ENCODE measurements at regions of chr1 and their contacts with region 1.

Region 1: DNA sequence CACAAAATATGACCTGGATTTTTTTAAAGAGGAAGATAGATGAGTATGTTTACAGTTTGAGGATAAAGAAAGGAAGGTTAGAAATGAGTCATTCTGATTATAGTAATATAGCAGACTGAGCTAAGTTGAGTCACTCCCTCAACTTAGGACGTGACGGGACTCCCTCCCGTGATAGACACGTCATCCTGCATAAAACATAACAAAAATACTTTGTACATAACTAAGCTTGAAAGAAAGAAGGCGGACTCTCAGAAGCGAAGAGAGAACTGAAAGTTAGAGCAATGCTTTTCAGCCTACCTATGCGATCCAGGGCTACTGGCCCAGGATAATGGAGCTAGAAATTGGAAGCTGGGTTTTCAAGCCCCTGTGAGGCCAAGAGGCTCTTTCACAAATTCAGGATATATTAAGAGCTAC is 53.0 kb upstream of the DESI2 start:
- DNase-seq: no peak
- H3K4me3 ChIP-seq: no peak overlapping the region
- H3K27ac ChIP-seq: no peak overlapping the region
- H3K4me1 ChIP-seq: no peaks in the 10 kb centered on the region
- H3K27me3 ChIP-seq: no peaks in the 10 kb centered on the region
- CTCF ChIP-seq: no peak
- EP300 ChIP-seq: no peak
- POLR2A ChIP-seq: no peak
- RAD21 ChIP-seq: no peak

Region 2: DNA sequence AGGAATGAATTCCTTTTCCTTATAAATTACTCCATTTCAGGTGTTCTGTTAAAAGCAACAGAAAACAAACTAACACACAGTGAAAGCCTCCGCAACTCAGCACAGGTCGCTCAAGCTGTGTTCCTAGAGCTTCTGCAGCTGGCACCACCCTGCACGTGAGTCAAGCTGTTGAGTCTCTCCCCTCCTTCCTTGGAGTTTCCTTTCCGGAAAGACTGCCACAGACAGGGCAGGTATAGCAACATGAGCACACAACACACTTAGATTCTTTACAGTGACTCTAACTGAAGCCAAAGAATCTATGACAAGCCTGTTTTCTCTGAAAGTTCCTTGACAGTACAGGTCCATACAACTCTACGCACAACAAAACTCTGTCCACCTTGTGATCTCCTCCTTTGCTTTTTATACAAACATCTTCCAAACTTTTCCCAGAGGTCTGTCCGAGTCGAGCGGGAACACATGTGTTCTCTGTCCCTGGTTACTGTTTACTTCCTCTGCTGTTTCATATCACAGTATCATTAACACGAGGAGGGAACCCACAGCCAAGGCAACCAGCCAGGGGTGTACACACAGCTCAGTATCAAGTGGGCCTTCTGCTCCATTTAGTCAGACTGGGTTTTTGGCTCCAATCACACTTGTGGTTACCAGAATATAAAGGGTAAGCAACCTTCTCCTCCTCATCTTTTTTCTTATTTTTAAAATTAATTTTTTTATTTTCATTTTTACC is 14.3 kb after region 1 on chr1:
- CTCF ChIA-PET with region 1: interaction called, 16 read pairs
- POLR2A ChIA-PET with region 1: no interaction called
- DNase-seq: no peak
- H3K4me3 ChIP-seq: no peak overlapping the region
- H3K27ac ChIP-seq: no peak overlapping the region
- H3K4me1 ChIP-seq: peaks cover 0 to 6% (median 1%) of the 10 kb centered on the region in 4 experiments; a peak in 1 of 7 replicates
- H3K27me3 ChIP-seq: no peaks in the 10 kb centered on the region
- CTCF ChIP-seq: no peak
- EP300 ChIP-seq: no peak
- POLR2A ChIP-seq: no peak
- RAD21 ChIP-seq: no peak

Region 3: DNA sequence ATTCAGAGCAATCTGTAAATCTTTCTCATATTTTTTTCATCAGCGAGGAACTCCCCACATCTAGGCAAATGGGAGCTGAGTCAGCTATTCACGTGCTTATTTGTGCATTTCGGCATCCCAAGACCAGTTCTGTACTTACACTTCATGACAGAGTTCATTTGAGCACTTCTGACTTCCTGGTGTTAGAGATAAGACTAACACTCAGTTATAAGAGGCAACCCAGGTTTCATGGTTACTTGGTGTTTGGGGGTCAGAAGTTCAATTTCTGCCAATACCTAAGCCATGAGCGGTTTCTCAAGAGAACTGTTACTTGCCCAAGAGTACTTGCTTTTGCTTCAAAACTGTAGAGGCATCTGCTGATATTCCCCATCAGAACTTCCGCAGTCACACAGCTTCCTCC is 28.8 kb after region 1 on chr1:
- CTCF ChIA-PET with region 1: interaction called, 50 read pairs
- POLR2A ChIA-PET with region 1: no interaction called
- DNase-seq: no peak
- H3K4me3 ChIP-seq: no peak overlapping the region
- H3K27ac ChIP-seq: no peak overlapping the region
- H3K4me1 ChIP-seq: no peaks in the 10 kb centered on the region
- H3K27me3 ChIP-seq: no peaks in the 10 kb centered on the region
- CTCF ChIP-seq: no peak
- EP300 ChIP-seq: no peak
- POLR2A ChIP-seq: no peak
- RAD21 ChIP-seq: no peak

Region 4: DNA sequence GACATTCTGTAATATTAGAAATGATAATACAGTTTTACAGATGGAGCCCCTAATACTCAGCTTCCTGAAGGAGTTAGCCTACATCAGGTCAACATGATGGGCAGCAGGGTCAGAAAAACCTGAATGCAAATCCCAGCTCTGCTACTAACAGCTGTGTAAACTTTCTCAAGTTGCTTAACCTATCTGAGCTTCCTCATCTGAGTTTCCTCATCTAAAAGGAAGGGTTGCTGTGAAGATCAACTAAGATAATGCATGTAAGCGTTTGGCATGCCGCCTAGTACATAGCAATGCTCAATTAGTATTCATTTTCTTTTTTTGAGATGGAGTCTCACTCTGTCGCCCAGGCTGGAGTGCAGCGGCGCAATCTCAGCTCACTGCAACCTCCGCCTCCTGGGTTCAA is 34.6 kb after region 1 on chr1:
- CTCF ChIA-PET with region 1: interaction called, 50 read pairs
- POLR2A ChIA-PET with region 1: no interaction called
- DNase-seq: no peak
- H3K4me3 ChIP-seq: no peak overlapping the region
- H3K27ac ChIP-seq: no peak overlapping the region
- H3K4me1 ChIP-seq: peaks cover 0 to 3% (median 2%) of the 10 kb centered on the region in 4 experiments; a peak in 2 of 7 replicates
- H3K27me3 ChIP-seq: no peaks in the 10 kb centered on the region
- CTCF ChIP-seq: no peak
- EP300 ChIP-seq: no peak
- POLR2A ChIP-seq: no peak
- RAD21 ChIP-seq: no peak

Region 5: DNA sequence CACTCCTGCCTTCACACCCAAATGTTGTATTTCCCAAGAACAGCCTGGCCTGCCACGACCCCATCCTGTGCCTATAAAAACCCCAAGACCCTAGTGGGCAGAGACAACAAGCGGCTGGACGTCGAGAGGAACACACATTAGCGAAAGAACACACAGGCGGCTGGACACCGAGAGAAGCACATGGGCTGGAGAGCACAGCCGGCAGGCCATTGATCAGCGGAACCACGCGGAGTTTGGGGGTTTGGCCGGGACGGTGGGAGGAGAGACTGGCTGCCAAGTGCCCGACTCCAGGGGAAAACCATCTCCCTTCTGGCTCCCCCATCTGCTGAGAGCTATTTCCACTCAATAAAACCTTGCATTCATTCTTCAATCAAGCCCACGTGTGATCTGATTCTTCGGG is 42.6 kb after region 1 on chr1:
- CTCF ChIA-PET with region 1: interaction called, 50 read pairs
- POLR2A ChIA-PET with region 1: no interaction called
- DNase-seq: no peak
- H3K4me3 ChIP-seq: no peak overlapping the region
- H3K27ac ChIP-seq: no peak overlapping the region
- H3K4me1 ChIP-seq: peaks cover 0 to 4% (median 1%) of the 10 kb centered on the region in 4 experiments; a peak in 1 of 7 replicates
- H3K27me3 ChIP-seq: no peaks in the 10 kb centered on the region
- CTCF ChIP-seq: no peak
- EP300 ChIP-seq: no peak
- POLR2A ChIP-seq: no peak
- RAD21 ChIP-seq: no peak

Region 6: DNA sequence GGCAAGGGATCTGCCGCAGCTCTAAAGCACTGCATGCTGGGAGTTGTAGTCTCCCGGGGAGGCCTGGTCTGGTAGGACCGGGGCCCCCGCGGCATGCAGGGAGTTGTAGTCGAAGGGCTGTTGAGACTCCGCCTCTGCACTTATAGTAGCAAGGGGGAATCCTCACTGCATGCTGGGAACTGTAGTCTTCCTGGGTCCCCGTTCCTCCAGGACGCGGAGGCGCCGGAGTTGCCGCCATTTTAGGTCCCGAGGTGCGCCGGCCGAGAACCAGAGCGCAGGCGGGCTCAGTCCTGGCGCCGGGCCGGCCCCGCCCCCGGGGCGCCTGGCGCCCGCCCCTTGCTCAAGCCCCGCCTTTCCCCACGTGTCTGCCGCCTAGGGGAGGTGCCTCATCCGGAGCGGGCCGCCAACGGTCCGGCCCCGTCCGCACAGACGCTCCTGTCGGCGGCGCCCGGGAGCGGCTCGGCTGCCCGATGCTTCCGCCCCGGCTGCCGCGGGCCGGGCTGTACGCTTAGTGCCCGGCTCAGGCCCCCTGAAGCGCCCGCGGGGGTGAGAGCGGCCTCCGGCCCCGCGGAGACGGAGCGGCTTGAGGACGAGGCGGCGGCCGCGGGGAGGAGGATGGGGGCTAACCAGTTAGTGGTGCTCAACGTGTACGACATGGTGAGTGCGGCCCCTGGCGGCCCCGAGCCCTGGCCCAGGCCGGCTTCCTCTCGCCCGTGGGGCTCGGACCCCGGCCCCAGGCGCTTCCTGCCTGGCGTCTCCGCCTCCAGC is 52.9 kb after region 1 on chr1 and contains the start of gene DESI2:
- CTCF ChIA-PET with region 1: interaction called, 20 read pairs
- POLR2A ChIA-PET with region 1: interaction called, 6 read pairs
- DNase-seq: peak; percentile 95 to 98
- H3K4me3 ChIP-seq: peak within 1 kb of the TSS; percentile 76 to 89 (median 88)
- H3K27ac ChIP-seq: peak within 1 kb of the TSS; percentile 74
- H3K4me1 ChIP-seq: peaks cover 2 to 14% (median 11%) of the 10 kb centered on the region in 4 experiments; a peak in 6 of 7 replicates
- H3K27me3 ChIP-seq: no peaks in the 10 kb centered on the region
- CTCF ChIP-seq: peak; percentile 3 to 38 (median 31); a peak in 3 of 4 replicates
- EP300 ChIP-seq: no peak
- POLR2A ChIP-seq: peak; percentile 87 to 93
- RAD21 ChIP-seq: peak; percentile 31 to 32; a peak in 3 of 4 replicates
- total RNA-seq, gene DESI2: 105 and 110 TPM in 2 replicates

Region 7: GRCh38 chr1:244788493-244789275 is 188.7 kb after region 1 on chr1:
- CTCF ChIA-PET with region 1: interaction called, 64 read pairs
- POLR2A ChIA-PET with region 1: no interaction called
- DNase-seq: no peak
- H3K4me3 ChIP-seq: no peak overlapping the region
- H3K27ac ChIP-seq: no peak overlapping the region
- H3K4me1 ChIP-seq: peaks cover 0 to 8% (median 3%) of the 10 kb centered on the region in 4 experiments; a peak in 4 of 7 replicates
- H3K27me3 ChIP-seq: no peaks in the 10 kb centered on the region
- CTCF ChIP-seq: no peak
- EP300 ChIP-seq: no peak
- POLR2A ChIP-seq: no peak
- RAD21 ChIP-seq: no peak